Psoas muscle (tissue), 8 donors: ENCODE measurements at regions of chr12 and their contacts with region 1.

Region 1: GRCh38 chr12:56359851-56360767 is at the start of gene STAT2:
- DNase-seq: peak; percentile 99
- ATAC-seq: peak; percentile 98 to 99 (median 99)
- H3K4me3 ChIP-seq: peak within 1 kb of the TSS; percentile 98
- H3K27ac ChIP-seq: peak within 1 kb of the TSS; percentile 87
- H3K4me1 ChIP-seq: peaks cover 8% of the 10 kb centered on the region
- H3K27me3 ChIP-seq: no peaks in the 10 kb centered on the region
- CTCF ChIP-seq: no peak
- total RNA-seq, gene STAT2: 25.9 to 34.6 (median 30.9) TPM

Region 2: GRCh38 chr12:56117778-56118687 is 242.1 kb before region 1 on chr12 and contains the start of gene ZC3H10:
- intact Hi-C with region 1: no loop called
- DNase-seq: peak; percentile 97 to 98
- ATAC-seq: peak; percentile 80 to 86 (median 82)
- H3K4me3 ChIP-seq: peak within 1 kb of the TSS; percentile 81
- H3K27ac ChIP-seq: peak within 1 kb of the TSS; percentile 95
- H3K4me1 ChIP-seq: peaks cover 44% of the 10 kb centered on the region
- H3K27me3 ChIP-seq: no peaks in the 10 kb centered on the region
- CTCF ChIP-seq: peak; percentile 52
- total RNA-seq, gene ZC3H10: 5.0 to 10.3 (median 6.6) TPM

Region 3: GRCh38 chr12:56448860-56449621 is 88.9 kb after region 1 on chr12 and contains the start of gene TIMELESS:
- intact Hi-C with region 1: loop called in 1 of 2 experiments (anchors 5 kb)
- DNase-seq: peak; percentile 86 to 93
- ATAC-seq: peak; percentile 98 to 99 (median 98)
- H3K4me3 ChIP-seq: peak within 1 kb of the TSS; percentile 74
- H3K27ac ChIP-seq: peak within 1 kb of the TSS; percentile 86
- H3K4me1 ChIP-seq: peaks cover 3% of the 10 kb centered on the region
- H3K27me3 ChIP-seq: no peaks in the 10 kb centered on the region
- CTCF ChIP-seq: no peak
- total RNA-seq, gene TIMELESS: 2.8 to 4.3 (median 3.7) TPM

Region 4: DNA sequence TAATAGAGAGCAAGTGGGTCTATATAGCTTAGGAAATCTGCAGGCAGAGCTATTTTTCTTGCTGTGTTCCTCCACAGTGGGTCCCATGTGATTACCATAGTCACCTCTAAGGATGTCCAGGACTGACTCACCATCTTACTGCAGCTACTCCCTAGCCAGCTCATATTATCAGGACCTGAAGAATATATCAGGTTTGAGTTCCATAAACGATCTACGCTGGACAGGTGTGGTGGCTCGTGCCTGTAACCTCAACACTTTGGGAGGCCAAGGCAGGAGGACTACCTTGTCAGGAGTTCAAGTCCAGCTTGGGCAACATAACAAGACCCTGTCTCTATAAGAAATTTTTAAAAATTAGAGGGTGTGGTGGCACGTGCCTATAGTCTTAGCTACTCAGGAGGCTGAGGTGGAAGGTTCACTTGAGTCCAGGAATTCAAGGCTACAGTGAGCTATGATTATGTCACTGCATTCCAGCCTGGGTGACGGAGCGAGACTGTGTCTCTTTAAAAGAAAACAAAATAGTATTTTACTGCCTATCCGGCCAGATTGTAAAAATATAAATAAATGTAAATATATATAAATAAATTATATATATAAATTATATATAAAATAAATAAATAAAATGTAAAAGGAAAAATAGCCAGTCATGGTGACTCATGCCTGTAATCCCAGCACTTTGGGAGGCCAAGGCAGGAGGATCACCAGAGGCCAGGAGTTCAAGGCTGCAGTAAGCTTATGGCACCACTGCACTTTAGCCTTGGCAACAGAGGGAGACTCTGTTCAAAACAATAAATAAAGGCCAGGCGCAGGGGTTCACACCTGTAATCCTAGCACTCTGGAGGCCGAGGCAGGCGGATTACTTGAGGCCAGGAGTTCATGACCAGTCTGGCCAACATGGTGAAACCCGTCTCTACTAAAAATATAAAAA is 101.4 kb after region 1 on chr12:
- intact Hi-C with region 1: loop called (anchors 5 kb)
- DNase-seq: no peak
- ATAC-seq: no peak
- H3K4me3 ChIP-seq: no peak overlapping the region
- H3K27ac ChIP-seq: no peak overlapping the region
- H3K4me1 ChIP-seq: no peaks in the 10 kb centered on the region
- H3K27me3 ChIP-seq: no peaks in the 10 kb centered on the region
- CTCF ChIP-seq: no peak